CD8-positive, alpha-beta T cell (primary cell): ENCODE measurements at regions of chr1 and their contacts with region 1.

Region 1: DNA sequence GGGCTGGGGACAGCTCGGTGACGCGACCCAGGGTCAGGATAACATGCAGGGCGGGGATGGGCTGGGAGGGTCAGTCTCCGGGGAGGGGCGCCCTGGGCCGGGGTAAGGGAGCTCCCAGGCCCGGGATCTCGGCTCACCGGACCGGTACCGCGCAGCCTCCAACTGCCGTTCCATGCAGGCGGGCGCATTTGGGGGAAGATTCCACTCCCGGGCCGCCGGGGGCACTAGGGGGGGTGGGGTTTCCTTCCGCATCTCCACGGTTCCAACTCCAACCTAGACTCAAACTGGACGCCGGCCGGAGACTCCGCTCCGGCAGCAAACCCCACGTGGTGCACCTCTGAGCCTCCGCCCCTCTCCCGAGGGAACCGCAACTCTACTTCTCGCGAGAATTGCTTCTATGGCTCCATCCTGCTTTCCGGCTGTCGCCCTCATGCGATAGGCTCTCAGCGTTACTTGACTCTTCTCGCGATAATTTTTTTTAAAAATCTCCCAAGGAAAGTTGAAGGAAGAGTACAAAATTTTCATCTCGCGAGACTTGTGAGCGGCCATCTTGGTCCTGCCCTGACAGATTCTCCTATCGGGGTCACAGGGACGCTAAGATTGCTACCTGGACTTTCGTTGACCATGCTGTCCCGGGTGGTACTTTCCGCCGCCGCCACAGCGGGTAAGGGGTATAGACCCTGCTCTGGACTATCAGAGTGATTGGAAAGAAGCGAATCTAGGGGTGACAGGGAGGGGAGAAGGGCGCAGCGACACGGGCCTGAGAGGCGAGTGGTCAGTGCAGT is at the starts of genes ATP5PB and WDR77:
- DNase-seq: peak; percentile 75 to 98 (median 89)
- ATAC-seq: peak; percentile 94
- H3K4me3 ChIP-seq: peak within 1 kb of the TSS; percentile 77 to 86
- H3K4me3 Mint-ChIP-seq: peak within 1 kb of the TSS; percentile 99
- H3K27ac ChIP-seq: peak within 1 kb of the TSS; percentile 75 to 83
- H3K27ac Mint-ChIP-seq: peak within 1 kb of the TSS; percentile 98
- H3K4me1 ChIP-seq: peaks cover 58% of the 10 kb centered on the region
- H3K4me1 Mint-ChIP-seq: peaks cover 84% of the 10 kb centered on the region
- H3K27me3 ChIP-seq: no peaks in the 10 kb centered on the region
- H3K27me3 Mint-ChIP-seq: no peaks in the 10 kb centered on the region
- CTCF ChIP-seq: no peak
- total RNA-seq, gene ATP5PB: 59.9 to 64.6 TPM
- total RNA-seq, gene WDR77: 9.5 to 11.4 TPM

Region 2: GRCh38 chr1:111346089-111346885 is 102.8 kb before region 1 on chr1:
- CTCF ChIA-PET with region 1: no interaction called
- POLR2A ChIA-PET with region 1: no interaction called
- intact Hi-C with region 1: loop called in 1 of 2 experiments (anchors 1 kb)
- DNase-seq: peak; percentile 75 to 96 (median 87)
- ATAC-seq: peak; percentile 86
- H3K4me3 ChIP-seq: peak overlapping the region; percentile 67 to 68
- H3K4me3 Mint-ChIP-seq: peak overlapping the region; percentile 89
- H3K27ac ChIP-seq: peak overlapping the region; percentile 51 to 63
- H3K27ac Mint-ChIP-seq: peak overlapping the region; percentile 90
- H3K4me1 ChIP-seq: no peaks in the 10 kb centered on the region
- H3K4me1 Mint-ChIP-seq: peaks cover 23% of the 10 kb centered on the region
- H3K27me3 ChIP-seq: no peaks in the 10 kb centered on the region
- H3K27me3 Mint-ChIP-seq: no peaks in the 10 kb centered on the region
- CTCF ChIP-seq: no peak

Region 3: GRCh38 chr1:111463029-111463683 is 14.0 kb after region 1 on chr1:
- CTCF ChIA-PET with region 1: interaction called, 12 read pairs
- POLR2A ChIA-PET with region 1: no interaction called
- intact Hi-C with region 1: no loop called
- DNase-seq: no peak
- ATAC-seq: no peak
- H3K4me3 ChIP-seq: no peak overlapping the region
- H3K4me3 Mint-ChIP-seq: no peak overlapping the region
- H3K27ac ChIP-seq: no peak overlapping the region
- H3K27ac Mint-ChIP-seq: no peak overlapping the region
- H3K4me1 ChIP-seq: no peaks in the 10 kb centered on the region
- H3K4me1 Mint-ChIP-seq: peaks cover 26% of the 10 kb centered on the region
- H3K27me3 ChIP-seq: no peaks in the 10 kb centered on the region
- H3K27me3 Mint-ChIP-seq: no peaks in the 10 kb centered on the region
- CTCF ChIP-seq: no peak

Region 4: DNA sequence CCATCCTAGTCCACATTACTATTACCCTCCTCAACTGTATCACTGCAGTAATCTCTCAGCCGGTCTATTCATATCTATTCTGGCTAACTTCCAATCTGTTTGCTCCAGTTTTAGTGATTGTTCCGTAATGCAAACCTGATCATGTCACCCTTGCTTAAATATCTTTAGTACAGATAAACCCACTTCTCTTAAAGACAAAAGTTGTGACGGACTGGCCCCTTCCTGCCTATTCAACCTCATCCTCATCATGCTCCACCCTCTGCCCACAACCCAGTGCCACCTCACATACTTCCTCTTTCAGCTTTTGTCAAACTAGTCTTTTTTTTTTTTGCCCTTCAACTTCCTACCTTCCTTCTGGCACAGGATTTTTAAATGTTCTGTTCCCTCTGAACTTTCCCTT is 21.9 kb after region 1 on chr1:
- CTCF ChIA-PET with region 1: interaction called, 6 read pairs
- POLR2A ChIA-PET with region 1: interaction called, 9 read pairs
- intact Hi-C with region 1: loop called (anchors 1 to 2 kb)
- DNase-seq: peak; percentile 35 to 91 (median 75)
- ATAC-seq: peak; percentile 95
- H3K4me3 ChIP-seq: peak overlapping the region; percentile 28 to 32
- H3K4me3 Mint-ChIP-seq: no peak overlapping the region
- H3K27ac ChIP-seq: peak overlapping the region; percentile 54 to 84
- H3K27ac Mint-ChIP-seq: no peak overlapping the region
- H3K4me1 ChIP-seq: peaks cover 55% of the 10 kb centered on the region
- H3K4me1 Mint-ChIP-seq: peaks cover 25% of the 10 kb centered on the region
- H3K27me3 ChIP-seq: no peaks in the 10 kb centered on the region
- H3K27me3 Mint-ChIP-seq: no peaks in the 10 kb centered on the region
- CTCF ChIP-seq: no peak

Region 5: DNA sequence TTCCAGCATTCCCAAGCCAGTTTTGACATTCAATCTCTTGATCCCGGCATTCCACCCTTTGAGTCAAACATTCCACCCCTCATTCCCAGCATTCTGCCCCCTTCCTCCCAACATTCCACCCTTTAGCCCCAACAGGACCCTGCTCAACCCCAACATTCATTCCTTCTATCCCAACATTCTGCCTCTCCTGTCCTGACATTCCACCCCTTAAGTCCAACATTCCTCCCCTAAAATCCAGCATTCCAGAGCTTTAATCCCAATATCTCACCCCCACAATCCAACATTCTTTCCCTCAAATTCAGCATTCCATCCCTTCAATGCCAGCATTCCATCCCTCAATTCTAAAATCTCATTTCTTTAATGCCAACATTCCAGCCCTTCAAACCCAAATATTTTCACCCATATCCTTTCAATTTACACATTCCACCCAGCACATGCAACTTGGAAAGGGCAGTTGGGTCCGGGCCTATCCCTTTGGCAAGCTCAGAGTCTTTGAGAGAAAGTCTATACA is 329.5 kb after region 1 on chr1:
- CTCF ChIA-PET with region 1: no interaction called
- POLR2A ChIA-PET with region 1: no interaction called
- intact Hi-C with region 1: no loop called
- DNase-seq: no peak
- ATAC-seq: no peak
- H3K4me3 ChIP-seq: no peak overlapping the region
- H3K4me3 Mint-ChIP-seq: no peak overlapping the region
- H3K27ac ChIP-seq: no peak overlapping the region
- H3K27ac Mint-ChIP-seq: no peak overlapping the region
- H3K4me1 ChIP-seq: no peaks in the 10 kb centered on the region
- H3K4me1 Mint-ChIP-seq: no peaks in the 10 kb centered on the region
- H3K27me3 ChIP-seq: no peaks in the 10 kb centered on the region
- H3K27me3 Mint-ChIP-seq: peaks cover 2% of the 10 kb centered on the region
- CTCF ChIP-seq: no peak